Posterior vena cava (tissue), 2 donors: ENCODE measurements at regions of chr21 and their contacts with region 1.

Region 1: DNA sequence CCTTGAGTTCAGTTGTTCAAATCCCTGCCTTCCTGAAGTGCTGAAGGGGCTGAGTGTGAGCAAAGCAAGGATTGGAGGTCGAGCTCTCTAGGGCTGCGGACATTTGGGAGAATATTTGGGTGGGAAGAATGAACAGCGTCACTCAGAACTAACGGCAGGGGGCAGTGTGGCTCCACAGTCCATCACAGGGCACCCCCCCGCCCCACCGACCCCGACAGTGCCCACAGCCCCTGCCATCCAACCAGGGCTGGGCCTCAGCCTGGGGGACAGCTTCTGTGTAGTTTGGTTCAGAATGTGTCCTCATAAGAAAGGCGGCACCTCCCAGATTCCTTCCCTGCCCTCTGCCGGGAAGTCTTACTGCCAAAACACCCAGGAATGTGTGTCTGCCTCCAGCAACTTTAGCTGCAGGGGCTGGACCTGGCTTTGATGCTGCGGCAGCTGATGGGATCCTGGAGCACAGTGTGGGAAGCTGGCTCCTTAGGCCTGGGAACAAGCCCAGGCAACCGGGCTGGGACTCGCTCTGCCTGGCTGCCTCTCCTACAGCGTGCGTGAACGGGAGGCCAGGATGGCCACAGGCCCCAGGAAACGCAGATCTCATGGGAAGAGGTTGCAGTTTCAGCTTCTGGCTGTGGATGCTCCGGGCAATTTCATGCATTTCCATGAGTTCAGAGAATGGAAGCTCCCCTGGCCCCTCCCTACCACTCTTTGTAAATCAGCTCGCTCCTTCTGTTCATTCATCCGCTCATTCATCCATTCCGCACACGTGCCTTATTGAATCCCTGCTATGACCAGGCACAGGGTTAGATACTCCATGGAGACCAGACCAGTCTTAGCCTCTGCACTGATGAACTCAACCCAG is 104.9 kb upstream of the TMPRSS2 start:
- DNase-seq: peak; percentile 95

Region 2: DNA sequence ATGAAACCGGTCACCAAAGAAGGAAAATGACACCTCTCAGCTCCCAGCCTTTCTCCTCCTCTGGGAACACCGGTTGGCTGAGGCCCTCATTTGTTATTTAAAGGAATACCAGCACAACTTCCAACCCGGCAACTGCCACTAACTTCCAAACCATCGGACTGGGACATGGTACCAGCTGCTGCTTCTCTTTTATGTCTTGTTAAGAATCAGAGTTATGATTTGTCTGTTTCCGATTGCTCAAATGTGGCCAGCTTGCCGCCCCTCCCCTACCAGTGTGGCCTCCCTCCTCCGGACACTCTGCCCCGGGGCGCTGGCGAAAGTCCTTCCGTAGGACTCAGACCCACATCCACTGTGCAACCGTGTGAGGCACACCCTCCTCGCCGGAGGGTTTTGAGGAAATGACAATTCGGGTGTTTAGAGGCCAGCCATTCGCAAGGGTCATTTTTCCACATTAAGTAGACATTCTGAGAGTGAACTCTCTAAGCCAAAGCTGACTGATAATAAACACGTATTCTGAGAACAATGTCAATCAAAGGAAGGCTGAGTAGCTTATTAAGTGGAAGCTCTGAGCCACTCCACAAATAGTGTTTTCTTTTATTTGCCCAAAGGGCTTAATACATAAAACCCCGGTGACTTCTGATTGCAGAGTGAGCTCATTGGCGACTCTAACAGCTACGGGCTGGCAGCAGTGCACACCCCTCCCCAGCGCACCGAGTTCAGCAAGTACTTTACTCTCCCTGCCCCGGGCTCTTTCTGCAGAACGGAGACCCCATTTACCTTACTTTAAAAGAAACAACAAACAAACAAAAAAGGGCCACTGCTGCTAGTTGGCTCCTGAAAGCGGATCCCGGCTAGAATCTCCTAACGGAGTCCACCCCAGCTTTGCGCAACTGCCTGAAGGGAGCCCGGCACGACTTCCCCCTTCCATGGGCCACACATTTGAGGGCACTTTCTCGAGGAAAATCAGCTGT is 148.6 kb after region 1 on chr21:
- intact Hi-C with region 1: loop called in 1 of 2 experiments (anchors 5 kb)
- DNase-seq: peak; percentile 90

Region 3: DNA sequence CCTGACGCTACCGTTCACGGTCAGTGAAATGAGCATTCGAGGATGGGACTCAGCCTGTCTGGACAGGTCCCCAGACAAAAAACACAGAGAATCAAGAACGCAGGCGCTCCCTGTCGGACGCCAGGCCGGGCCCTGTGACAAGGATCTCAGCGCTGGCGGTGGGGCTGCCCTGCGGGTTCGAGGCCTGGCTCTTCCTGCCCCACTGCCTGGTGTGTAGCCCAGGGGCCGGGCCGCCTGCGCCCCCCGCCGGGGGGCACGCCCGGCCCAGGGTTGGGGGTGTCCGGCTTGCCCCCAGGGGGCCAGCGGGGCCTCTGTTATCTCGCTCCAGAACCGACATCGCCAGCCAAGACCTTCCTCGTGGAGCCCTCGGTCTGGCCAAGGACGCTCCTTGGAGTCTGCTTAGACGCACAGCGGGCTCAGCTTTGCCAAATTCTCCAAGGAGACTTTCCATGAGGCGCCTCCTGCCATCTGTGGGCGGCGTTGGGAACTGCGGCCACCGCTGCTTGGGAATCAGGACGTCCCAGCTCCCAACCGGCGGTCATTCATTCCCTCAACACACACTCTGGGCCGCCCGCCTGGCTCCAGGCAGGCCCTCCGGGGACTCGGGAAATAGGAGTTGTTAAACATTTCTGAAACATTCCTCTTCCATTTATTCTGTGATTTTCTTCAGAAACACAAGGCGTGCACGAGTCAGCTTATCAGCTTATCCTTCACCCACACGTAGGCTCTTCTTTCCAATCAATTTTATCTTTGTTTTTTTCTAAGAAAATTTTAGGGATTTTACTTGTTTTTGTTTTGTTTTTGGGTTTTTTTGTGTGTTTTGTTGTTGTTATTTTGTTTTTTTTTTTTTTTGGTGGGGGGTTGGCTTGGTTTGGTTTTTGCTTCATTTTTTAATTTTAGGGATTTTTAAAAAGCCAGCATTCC is 165.3 kb after region 1 on chr21:
- intact Hi-C with region 1: loop called (anchors 2 to 5 kb)
- DNase-seq: peak; percentile 96